CD8-positive, alpha-beta memory T cell (primary cell): ENCODE measurements at regions of chr22 and their contacts with region 1.

Region 1: DNA sequence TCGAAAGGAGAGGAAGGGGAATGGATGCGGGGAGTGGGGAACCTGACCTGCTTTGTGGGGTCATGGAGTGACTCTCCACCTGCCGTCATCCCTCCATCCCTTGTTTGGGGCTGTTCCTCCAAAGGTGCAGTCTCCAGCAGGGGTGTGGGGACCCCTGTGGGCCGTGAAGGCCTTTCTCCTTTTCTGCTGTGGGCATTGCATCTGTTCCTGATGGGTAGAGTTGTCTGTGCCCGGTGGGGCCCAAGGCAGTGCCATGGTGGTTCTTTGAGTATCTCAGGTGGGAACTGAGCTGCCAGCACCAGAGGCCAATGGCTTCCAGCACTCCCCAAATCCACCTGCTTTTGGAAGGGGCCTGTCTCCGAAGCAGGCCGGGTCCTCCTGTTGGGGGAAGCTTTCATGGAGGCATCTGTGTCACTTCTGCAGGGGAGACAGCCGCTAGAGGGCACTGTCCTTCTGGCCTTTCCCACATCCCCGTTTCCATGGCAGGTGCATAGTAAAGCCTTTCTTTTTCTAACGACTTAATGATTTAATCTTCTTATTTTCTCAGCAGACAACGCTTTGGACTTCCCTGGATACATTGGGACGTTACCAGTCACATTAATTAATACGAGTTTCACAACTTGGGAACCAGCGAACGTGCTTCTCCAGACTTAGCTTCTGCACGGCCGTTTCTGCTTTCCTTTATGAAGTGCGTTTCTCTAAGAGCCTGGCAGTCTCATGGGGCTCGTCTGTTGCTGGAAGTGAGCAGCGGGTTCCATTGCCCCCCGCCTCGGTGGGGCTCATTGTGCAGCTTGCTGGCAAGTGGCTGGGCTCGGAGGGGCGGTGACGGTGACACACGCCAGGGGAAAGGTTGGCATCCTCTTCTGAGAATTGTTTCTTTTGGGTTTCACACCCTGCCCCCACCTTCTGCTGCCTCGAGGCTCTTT is 57.1 kb downstream of the PARVB start:
- DNase-seq: peak; percentile 48 to 80 (median 53)
- H3K4me3 ChIP-seq: no peak overlapping the region
- H3K4me3 Mint-ChIP-seq: no peak overlapping the region
- H3K27ac ChIP-seq: no peak overlapping the region
- H3K27ac Mint-ChIP-seq: no peak overlapping the region
- H3K4me1 ChIP-seq: no peaks in the 10 kb centered on the region
- H3K4me1 Mint-ChIP-seq: no peaks in the 10 kb centered on the region
- H3K27me3 ChIP-seq: no peaks in the 10 kb centered on the region
- H3K27me3 Mint-ChIP-seq: peaks cover 0 to 5% of the 10 kb centered on the region in 2 donors

Region 2: DNA sequence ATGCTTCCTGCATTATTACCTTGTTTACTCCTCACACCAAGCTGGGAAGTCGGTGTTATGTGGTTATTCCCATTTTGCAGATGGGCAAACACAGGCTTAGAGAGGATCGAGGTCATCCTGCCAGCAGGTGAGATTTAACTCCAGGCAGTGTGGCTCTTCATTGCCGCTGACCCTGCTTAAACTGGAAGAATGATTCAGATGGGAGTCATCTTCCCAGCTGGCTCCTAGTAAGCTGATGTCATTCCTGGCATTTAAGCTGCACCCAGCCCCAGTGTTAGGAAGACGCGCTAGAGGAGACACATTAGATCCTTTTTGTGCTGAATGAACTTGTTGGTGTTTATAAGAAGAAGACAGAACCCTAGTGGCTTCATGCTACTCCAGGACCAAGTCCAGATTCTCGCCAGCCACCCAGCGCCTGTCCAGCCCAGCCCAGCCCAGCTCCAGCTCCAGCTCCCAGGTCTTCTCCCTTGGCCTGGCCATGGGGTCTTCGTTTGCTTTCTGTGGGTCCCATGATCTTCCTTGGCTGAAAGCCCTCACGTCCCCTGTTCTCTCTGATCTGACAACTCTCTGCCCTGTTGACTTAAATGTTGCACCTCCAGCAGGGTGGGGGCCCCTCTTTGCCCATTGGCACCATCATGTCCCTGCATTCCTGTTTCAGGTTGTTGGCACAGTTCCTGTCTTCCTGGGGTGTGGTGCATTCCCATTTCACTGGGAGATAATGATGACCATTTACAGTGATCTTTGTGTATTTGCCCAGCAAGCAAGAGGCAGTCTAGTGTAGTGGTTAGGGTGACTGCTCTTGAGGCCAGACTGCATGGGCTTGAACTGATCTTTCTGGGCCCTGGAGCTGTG is 43.5 kb before region 1 on chr22:
- CTCF ChIA-PET with region 1: no interaction called
- POLR2A ChIA-PET with region 1: no interaction called
- DNase-seq: no peak
- H3K4me3 ChIP-seq: no peak overlapping the region
- H3K4me3 Mint-ChIP-seq: no peak overlapping the region
- H3K27ac ChIP-seq: no peak overlapping the region
- H3K27ac Mint-ChIP-seq: peak overlapping the region in 1 of 8 donors; percentile 37
- H3K4me1 ChIP-seq: no peaks in the 10 kb centered on the region
- H3K4me1 Mint-ChIP-seq: peaks cover 0 to 7% (median 6%) of the 10 kb centered on the region in 3 donors
- H3K27me3 ChIP-seq: no peaks in the 10 kb centered on the region
- H3K27me3 Mint-ChIP-seq: no peaks in the 10 kb centered on the region

Region 3: DNA sequence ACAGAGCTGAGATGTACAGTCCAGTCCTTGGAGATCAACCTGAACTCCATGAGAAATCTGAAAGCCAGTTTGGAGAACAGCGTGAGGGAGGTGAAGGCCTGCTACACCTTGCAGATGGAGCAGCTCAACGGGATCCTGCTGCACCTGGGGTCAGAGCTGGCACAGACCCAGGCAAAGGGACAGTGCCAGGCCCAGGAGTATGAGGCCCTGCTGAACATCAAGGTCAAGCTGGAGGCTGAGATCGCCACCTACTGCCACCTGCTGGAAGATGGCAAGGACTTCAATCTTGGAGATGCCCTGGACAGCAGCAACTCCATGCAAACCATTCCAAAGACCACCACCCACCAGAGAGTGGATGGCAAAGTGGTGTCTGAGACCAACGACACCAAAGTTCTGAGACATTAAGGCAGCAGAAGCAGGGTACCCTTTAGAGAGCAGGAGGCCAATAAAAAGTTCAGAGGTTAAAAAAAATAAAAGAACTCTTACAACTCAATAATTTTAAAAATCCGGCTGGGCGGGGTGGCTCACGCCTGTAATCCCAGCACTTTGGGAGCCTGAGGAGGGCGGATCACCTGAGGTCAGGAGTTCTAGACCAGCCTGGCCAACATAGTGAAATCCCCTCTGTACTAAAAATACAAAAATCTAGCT is 486.8 kb after region 1 on chr22:
- CTCF ChIA-PET with region 1: interaction called, 26 read pairs
- POLR2A ChIA-PET with region 1: interaction called, 3 read pairs
- DNase-seq: peak; percentile 30 to 68 (median 35)
- H3K4me3 ChIP-seq: no peak overlapping the region
- H3K4me3 Mint-ChIP-seq: no peak overlapping the region
- H3K27ac ChIP-seq: no peak overlapping the region
- H3K27ac Mint-ChIP-seq: peak overlapping the region in 2 of 8 donors; percentile 76 to 82
- H3K4me1 ChIP-seq: no peaks in the 10 kb centered on the region
- H3K4me1 Mint-ChIP-seq: peaks cover 0 to 9% (median 2%) of the 10 kb centered on the region in 3 donors
- H3K27me3 ChIP-seq: no peaks in the 10 kb centered on the region
- H3K27me3 Mint-ChIP-seq: peaks cover 1 to 15% of the 10 kb centered on the region in 2 donors

Region 4: DNA sequence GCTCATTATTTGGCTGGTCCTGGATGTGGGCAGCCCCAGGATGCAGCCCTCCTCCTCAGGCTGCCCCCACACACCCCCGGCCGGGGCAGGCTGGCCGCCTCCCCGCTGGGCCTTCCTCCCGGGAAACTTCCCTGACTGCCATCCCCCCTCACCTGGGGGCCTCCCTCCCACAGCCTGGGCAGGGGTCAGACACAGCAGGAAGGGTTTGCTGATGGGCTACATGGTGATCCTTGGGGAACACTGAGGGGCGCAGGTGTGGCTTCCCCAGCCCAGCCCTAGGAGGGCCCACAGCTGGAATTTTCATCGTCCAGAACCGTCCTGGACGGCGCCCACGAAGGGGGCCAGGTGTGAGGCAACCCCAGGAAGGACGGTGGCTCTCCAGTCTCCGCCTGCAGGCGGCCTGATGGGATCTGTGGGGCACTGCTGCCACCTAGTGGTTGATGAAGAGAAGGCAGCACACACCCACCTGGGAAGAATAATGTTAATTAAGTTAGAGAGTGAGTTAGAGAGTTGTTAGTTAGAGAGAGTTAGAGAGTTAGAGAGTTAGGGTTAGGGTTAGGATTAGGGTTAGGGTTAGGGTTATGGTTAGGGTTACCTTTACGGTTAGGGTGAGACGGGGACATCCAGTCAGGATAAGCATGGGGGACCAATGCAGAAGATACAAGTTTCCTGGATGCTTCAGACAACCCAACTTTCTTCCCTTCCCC is 544.9 kb after region 1 on chr22:
- CTCF ChIA-PET with region 1: interaction called, 45 read pairs
- POLR2A ChIA-PET with region 1: no interaction called
- DNase-seq: peak; percentile 68 to 86 (median 72)
- H3K4me3 ChIP-seq: no peak overlapping the region
- H3K4me3 Mint-ChIP-seq: peak overlapping the region in 1 of 7 donors; percentile 38
- H3K27ac ChIP-seq: no peak overlapping the region
- H3K27ac Mint-ChIP-seq: peak overlapping the region in 6 of 8 donors; percentile 3 to 48 (median 16)
- H3K4me1 ChIP-seq: peaks cover 3% of the 10 kb centered on the region
- H3K4me1 Mint-ChIP-seq: peaks cover 4 to 19% (median 6%) of the 10 kb centered on the region in 3 donors
- H3K27me3 ChIP-seq: no peaks in the 10 kb centered on the region
- H3K27me3 Mint-ChIP-seq: peaks cover 0 to 5% of the 10 kb centered on the region in 2 donors